ENCODE measurements at regions of chr2 and their contacts with region 1.

Region 1: GRCh38 chr2:70301344-70302194 is at the start of gene FAM136A:
- DNase-seq: peak; percentile 93
- H3K4me3 Mint-ChIP-seq: peak within 1 kb of the TSS; percentile 86
- H3K27ac Mint-ChIP-seq: peak within 1 kb of the TSS; percentile 92
- H3K4me1 Mint-ChIP-seq: peaks cover 27% of the 10 kb centered on the region
- H3K27me3 Mint-ChIP-seq: no peaks in the 10 kb centered on the region
- total RNA-seq, gene FAM136A: 48.0 to 49.8 TPM

Region 2: DNA sequence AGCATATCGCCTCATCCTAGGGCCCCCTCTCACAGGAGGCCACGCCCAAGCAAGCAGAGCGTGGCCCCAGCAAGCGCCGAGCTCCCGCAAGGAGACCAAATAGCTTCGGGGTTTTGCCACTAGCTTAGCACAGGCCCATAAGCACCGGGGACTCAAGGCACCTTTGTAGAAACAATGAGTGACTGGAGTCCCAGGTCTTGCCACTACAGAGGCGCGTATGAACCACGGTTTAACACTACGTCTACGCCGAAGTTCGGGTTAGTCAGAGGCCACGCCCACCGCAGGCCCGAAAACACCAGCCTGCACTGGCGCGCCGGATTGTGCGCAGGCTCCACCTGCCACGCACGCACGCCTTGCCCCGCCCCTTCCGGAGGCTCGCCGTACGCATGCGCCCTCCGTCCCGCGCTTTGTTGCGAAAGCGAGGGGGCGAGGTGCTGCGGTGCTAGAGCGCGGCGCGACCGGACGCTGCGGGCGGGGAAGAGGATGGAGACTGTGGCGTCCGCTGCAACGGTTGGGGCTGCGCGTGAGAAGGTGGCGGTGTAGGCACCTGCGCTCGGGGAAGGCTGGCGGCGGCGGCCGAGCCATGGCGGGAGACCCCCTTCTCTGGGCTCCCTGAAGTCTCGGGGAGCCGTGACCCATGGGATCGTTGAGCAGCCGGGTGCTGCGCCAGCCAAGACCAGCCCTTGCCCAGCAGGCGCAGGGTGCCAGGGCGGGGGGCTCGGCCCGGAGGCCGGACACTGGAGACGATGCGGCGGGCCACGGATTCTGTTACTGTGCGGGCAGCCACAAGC is 472.1 kb before region 1 on chr2 and contains the start of gene GMCL1:
- CTCF ChIA-PET with region 1: interaction called, 3 read pairs
- POLR2A ChIA-PET with region 1: no interaction called
- intact Hi-C with region 1: loop called (anchors 5 kb)
- DNase-seq: peak; percentile 99
- H3K4me3 Mint-ChIP-seq: peak within 1 kb of the TSS; percentile 81
- H3K27ac Mint-ChIP-seq: peak within 1 kb of the TSS; percentile 92
- H3K4me1 Mint-ChIP-seq: peaks cover 40% of the 10 kb centered on the region
- H3K27me3 Mint-ChIP-seq: no peaks in the 10 kb centered on the region
- total RNA-seq, gene GMCL1: 20.6 to 22.1 TPM

Region 3: GRCh38 chr2:70190418-70191243 is 110.9 kb before region 1 on chr2 and contains the start of gene C2orf42:
- CTCF ChIA-PET with region 1: interaction called, 6 read pairs
- POLR2A ChIA-PET with region 1: interaction called, 3 read pairs
- intact Hi-C with region 1: loop called (anchors 2 kb)
- DNase-seq: peak; percentile 98
- H3K4me3 Mint-ChIP-seq: peak within 1 kb of the TSS; percentile 97
- H3K27ac Mint-ChIP-seq: peak within 1 kb of the TSS; percentile 99
- H3K4me1 Mint-ChIP-seq: peaks cover 20% of the 10 kb centered on the region
- H3K27me3 Mint-ChIP-seq: peaks cover 1% of the 10 kb centered on the region
- total RNA-seq, gene C2orf42: 23.5 to 23.9 TPM

Region 4: DNA sequence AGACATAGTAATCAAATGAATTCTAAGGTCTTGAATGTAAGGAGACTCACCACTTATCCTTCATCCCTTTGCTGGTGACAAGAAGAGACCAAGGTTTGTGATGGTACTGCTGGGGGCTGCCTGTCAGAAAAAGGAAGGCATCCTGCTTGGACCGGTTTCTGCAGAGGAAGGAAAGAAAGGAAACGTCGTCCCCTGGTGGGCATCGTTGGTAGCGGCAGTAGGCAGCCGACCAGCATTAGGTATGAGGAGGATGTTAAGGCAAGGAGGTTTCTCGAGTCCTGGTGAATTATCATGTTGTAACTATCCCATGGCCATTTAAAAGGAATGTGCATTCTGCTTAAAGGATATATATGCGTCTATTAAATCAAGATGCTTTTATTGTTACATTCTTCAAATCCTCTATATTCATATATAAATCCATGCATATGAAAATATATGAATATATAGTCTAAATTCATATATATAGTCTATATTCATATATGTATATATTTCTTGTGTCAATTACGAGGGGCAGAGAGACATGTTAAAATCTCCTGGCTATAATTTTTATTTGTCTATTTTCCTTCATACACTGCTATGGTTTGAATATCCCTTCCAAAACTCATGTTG is 346.4 kb after region 1 on chr2:
- CTCF ChIA-PET with region 1: interaction called, 99 read pairs
- POLR2A ChIA-PET with region 1: no interaction called
- intact Hi-C with region 1: loop called (anchors 1 kb)
- DNase-seq: peak; percentile 83
- H3K4me3 Mint-ChIP-seq: no peak overlapping the region
- H3K27ac Mint-ChIP-seq: no peak overlapping the region
- H3K4me1 Mint-ChIP-seq: no peaks in the 10 kb centered on the region
- H3K27me3 Mint-ChIP-seq: no peaks in the 10 kb centered on the region

Region 5: DNA sequence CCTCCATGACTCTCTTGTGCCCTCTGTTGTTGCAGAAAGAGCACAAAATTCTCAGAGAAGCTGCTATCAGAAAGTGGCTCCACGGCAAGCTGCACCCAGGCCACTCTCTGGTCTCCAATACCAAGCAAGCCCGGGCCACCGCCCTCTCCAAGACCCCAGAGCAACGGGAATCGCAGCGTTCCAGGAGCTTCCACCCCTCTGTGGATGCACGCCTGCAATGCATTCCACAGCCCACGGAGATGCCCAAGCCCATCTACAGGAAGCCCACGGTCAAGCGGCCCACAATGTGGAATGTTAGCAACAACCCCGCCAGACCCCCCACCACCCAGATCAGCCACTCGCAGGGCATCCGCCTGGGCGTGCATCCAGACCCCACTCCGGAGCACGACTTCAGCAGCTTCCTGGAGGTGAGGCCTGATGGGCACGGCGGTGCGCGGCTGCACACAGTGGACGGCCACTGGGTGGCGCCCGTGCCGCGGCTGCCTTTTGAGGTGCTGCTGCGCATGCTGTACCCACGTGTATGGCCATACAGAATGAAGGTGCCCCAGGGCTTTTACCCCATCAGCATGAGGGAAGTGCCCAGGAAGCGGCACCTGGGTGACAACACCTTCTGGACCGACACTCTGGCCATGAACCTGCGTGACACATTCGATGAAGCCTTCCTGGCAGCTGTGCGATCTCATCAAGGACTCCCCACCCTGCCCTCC is 683.2 kb after region 1 on chr2:
- CTCF ChIA-PET with region 1: no interaction called
- POLR2A ChIA-PET with region 1: no interaction called
- intact Hi-C with region 1: loop called (anchors 10 kb)
- DNase-seq: peak; percentile 87
- H3K4me3 Mint-ChIP-seq: no peak overlapping the region
- H3K27ac Mint-ChIP-seq: no peak overlapping the region
- H3K4me1 Mint-ChIP-seq: peaks cover 12% of the 10 kb centered on the region
- H3K27me3 Mint-ChIP-seq: no peaks in the 10 kb centered on the region